Mucosa of descending colon (tissue), 3 donors: ENCODE measurements at regions of chr9 and their contacts with region 1.

Region 1: DNA sequence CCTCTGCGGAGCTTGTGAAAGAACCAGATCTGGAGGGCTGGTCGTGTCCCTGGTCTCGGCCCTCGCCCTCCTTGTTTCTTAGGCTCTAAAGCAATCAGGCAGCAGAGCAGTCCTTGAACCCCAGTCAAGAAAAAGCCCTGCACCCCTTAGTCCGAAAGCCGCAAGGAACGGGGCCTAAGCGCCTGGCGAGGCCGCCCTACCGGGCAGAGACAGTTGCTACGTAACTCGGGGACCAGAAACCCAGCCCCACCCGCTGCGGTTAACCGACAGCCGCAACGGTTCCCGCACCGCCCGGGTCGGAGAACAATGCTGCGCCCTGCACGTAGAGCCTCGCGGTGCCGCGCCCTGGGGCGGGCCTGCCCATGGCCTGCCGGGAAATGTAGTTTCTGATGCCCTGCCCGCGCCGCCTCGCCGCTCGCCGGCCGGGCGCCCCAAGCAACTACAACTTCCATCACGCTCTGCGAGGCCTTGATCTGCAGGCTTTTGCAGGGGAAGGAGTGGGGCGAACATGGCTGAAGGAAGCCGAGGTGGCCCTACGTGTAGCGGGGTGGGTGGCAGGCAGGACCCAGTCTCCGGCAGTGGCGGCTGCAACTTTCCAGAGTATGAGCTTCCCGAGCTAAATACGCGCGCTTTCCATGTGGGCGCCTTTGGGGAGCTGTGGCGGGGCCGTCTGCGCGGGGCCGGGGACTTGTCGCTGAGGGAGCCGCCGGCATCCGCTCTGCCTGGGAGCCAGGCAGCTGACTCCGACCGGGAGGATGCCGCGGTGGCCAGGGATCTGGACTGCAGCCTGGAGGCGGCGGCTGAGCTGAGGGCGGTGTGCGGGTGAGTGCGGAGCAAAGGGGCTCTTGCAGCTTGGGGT is at the start of gene SNAPC3:
- DNase-seq: peak; percentile 97 to 98 (median 98)
- ATAC-seq: peak; percentile 97
- H3K4me3 ChIP-seq: peak within 1 kb of the TSS; percentile 95
- H3K4me1 ChIP-seq: peaks cover 23% of the 10 kb centered on the region
- CTCF ChIP-seq: no peak
- total RNA-seq, gene SNAPC3: 32.2 to 44.9 (median 44.5) TPM

Region 2: DNA sequence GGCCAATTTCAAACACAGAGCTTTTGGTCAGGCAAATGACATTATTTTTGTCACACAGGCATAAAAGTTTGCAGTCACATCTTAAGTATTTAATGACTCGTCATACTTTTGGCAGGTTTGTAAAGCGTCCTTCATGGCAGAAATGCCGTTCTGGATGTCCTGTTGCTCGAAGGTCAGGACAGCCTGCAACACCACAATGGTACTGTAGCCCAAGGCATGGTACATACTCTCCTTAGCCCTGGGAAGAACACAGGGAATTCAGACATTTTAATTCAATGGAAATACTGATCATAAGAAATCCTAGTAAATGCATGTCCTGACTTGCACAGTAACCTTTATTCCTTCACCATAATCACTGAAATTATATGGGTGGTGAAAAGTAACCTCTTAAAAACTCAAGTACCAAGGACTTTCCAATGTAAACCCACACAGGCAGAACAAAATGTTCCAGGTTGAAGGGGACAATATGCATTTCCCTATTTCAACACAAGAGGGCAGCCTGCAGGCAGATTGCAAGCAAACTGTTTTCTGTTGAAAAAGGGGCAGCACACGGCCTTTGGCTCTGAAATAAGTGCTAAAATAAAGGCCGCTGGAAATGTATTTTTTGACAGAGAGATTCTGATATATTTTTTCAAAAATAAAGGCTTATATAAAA is 211.3 kb before region 1 on chr9:
- intact Hi-C with region 1: loop called in 1 of 2 experiments (anchors 10 kb)
- DNase-seq: peak in 1 of 3 donors; percentile 90
- ATAC-seq: peak; percentile 87
- H3K4me3 ChIP-seq: no peak overlapping the region
- H3K4me1 ChIP-seq: peaks cover 10% of the 10 kb centered on the region
- CTCF ChIP-seq: peak; percentile 81

Region 3: DNA sequence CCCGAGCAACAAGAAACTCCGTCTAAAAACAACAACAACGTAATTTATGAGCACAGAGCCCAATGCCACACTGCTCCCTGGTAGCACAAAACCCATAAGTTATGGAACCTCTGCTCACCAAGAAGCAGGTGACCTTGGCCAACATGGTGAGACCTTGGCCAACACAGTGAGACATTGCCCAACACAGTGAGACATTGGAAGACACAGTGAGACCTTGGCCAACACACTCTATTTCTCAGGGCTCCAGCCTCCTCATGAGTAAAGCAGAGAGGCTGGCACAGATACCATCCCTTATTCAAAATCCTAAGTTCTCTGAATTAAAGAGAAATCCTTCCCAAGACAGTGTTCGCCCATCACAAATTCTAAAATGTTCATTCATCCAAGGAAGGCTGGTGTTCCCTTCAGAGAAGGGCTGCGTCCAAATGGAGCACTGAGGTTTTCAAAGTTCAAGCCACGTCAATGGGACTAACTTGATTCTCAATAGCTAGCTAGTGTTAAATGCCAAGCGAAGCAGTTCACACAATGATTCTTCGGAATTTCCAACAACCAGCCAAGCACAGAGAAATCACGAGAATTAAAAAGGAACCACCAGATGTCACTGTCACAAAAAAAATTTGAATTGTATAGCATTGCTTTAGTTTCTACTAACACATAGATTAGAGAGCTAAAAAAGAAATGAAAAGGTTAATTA is 145.1 kb before region 1 on chr9:
- intact Hi-C with region 1: loop called in 1 of 2 experiments (anchors 10 kb)
- DNase-seq: no peak
- ATAC-seq: no peak
- H3K4me3 ChIP-seq: no peak overlapping the region
- H3K4me1 ChIP-seq: peaks cover 29% of the 10 kb centered on the region
- CTCF ChIP-seq: no peak

Region 4: DNA sequence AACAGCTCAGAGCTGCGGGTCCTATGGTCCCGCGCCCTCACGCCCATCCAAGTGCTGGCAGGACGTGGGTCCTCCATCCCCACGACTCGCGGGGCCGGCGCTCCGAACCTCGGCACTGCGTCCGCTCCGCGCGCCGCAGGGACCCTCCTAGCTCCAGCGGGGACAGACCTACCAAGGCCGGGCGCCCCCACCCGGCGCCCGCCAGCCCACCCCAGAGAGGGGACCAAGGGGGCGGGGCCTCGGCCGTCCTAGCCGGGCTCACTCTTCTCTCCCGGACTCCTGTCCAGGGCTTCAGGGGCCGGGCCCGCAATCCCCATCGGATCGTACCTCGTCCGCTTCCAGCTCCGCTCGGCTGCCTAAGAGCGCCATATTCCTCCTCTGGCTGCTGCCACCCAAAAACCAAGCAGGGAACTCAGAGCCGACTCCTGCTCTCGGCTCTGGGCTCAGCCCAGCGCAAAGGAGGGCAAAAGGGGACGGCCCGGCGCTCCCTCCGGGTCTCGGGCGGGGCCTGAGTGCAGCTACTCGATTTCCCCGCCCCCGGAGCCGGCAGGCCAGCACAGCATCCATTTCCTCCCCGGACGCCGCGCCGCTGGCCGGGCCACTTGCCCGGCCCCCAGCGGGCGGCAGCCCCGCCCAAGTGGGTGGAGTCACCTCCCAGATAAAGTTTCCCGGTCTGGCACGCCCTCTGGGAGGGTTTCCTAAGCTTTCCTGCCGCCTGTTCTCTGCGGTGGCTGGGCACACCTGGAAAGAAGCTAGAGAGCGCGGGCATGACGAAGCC is 115.7 kb before region 1 on chr9 and contains the start of gene TTC39B:
- intact Hi-C with region 1: loop called in 1 of 2 experiments (anchors 10 kb)
- DNase-seq: peak; percentile 97 to 98 (median 97)
- ATAC-seq: peak; percentile 94
- H3K4me3 ChIP-seq: peak within 1 kb of the TSS; percentile 84
- H3K4me1 ChIP-seq: peaks cover 8% of the 10 kb centered on the region
- CTCF ChIP-seq: no peak
- total RNA-seq, gene TTC39B: 36.9 to 48.0 (median 43.8) TPM